ENCODE measurements at regions of chr5 and their contacts with region 1.

Region 1: DNA sequence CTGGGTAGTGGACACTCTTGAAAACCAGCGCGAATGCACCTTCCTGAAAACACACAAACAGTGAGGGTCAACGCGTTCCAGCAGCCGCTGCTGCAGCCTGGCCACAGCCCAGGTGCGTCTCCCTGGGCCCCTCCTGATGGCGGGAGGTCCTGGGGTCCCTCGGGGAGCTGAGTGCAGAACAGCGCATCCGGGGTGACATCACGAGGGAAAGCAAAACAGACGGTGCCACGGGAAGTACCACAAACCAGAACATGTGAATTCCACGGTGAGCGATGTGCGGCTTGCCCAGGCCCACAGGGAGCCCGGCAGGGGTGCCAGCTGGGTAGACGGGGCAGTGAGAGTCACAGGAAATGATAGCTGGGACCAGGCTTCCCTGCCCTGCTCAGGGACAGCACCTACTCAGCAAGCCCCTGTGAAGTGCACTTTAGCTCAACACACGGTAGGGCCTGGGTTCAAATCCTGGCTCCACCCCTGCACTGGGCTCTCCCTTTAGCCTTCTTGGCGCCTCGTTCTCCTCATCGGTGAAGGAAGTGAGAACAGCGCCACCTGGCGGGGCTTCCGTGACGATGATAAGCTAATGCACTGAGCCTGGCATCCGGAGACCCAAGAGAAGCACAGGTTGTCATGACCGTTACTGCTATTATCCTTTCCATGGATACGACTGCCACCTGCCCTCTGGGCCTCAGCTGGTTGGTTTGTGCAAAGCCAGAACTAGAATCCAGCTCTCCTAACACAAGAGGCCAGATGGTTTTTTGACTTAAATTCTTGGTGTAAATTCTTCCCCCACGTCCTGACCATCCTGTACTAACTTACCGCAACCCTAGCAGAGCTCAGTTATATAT is 24.6 kb downstream of the GFPT2 start:
- DNase-seq: peak; percentile 94
- ATAC-seq: peak; percentile 96
- H3K4me3 Mint-ChIP-seq: no peak overlapping the region
- H3K27ac Mint-ChIP-seq: no peak overlapping the region
- H3K4me1 Mint-ChIP-seq: peaks cover 2% of the 10 kb centered on the region
- H3K27me3 Mint-ChIP-seq: peaks cover 9% of the 10 kb centered on the region
- CTCF ChIP-seq: peak; percentile 88

Region 2: GRCh38 chr5:180201051-180201987 is 127.2 kb before region 1 on chr5:
- CTCF ChIA-PET with region 1: interaction called, 10 read pairs
- POLR2A ChIA-PET with region 1: no interaction called
- intact Hi-C with region 1: no loop called
- DNase-seq: peak; percentile 42
- ATAC-seq: no peak
- H3K4me3 Mint-ChIP-seq: no peak overlapping the region
- H3K27ac Mint-ChIP-seq: no peak overlapping the region
- H3K4me1 Mint-ChIP-seq: no peaks in the 10 kb centered on the region
- H3K27me3 Mint-ChIP-seq: peaks cover 11% of the 10 kb centered on the region
- CTCF ChIP-seq: peak; percentile 31

Region 3: GRCh38 chr5:180291943-180292831 is 36.3 kb before region 1 on chr5 and contains the start of gene MAPK9:
- CTCF ChIA-PET with region 1: interaction called, 61 read pairs
- POLR2A ChIA-PET with region 1: no interaction called
- intact Hi-C with region 1: no loop called
- DNase-seq: peak; percentile 88
- ATAC-seq: peak; percentile 82
- H3K4me3 Mint-ChIP-seq: peak within 1 kb of the TSS; percentile 82
- H3K27ac Mint-ChIP-seq: peak within 1 kb of the TSS; percentile 86
- H3K4me1 Mint-ChIP-seq: peaks cover 37% of the 10 kb centered on the region
- H3K27me3 Mint-ChIP-seq: no peaks in the 10 kb centered on the region
- CTCF ChIP-seq: no peak
- total RNA-seq, gene MAPK9: 31.8 to 33.2 TPM

Region 4: GRCh38 chr5:180343831-180344327 is 15.4 kb after region 1 on chr5:
- CTCF ChIA-PET with region 1: interaction called, 19 read pairs
- POLR2A ChIA-PET with region 1: no interaction called
- intact Hi-C with region 1: no loop called
- DNase-seq: no peak
- ATAC-seq: no peak
- H3K4me3 Mint-ChIP-seq: no peak overlapping the region
- H3K27ac Mint-ChIP-seq: no peak overlapping the region
- H3K4me1 Mint-ChIP-seq: no peaks in the 10 kb centered on the region
- H3K27me3 Mint-ChIP-seq: no peaks in the 10 kb centered on the region
- CTCF ChIP-seq: no peak